Posterior vena cava (tissue), 2 donors: ENCODE measurements at regions of chr5 and their contacts with region 1.

Region 1: GRCh38 chr5:142783601-142784341 is 13.6 kb downstream of the ARHGAP26 start:
- DNase-seq: peak; percentile 82

Region 2: GRCh38 chr5:142844857-142845256 is 61.1 kb after region 1 on chr5:
- intact Hi-C with region 1: loop called in 1 of 2 experiments (anchors 1 kb)
- DNase-seq: no peak